PC-3 (cell line): ENCODE measurements at regions of chr2 and their contacts with region 1.

Region 1: GRCh38 chr2:25201265-25201664 is 32.9 kb upstream of the POMC start:
- DNase-seq: peak; percentile 25
- ATAC-seq: peak; percentile 63
- H3K4me3 ChIP-seq: no peak overlapping the region
- H3K27ac ChIP-seq: no peak overlapping the region
- H3K4me1 ChIP-seq: no peaks in the 10 kb centered on the region
- H3K27me3 ChIP-seq: no peaks in the 10 kb centered on the region
- CTCF ChIP-seq: peak; percentile 35; the same call in 1 of the 2 replicates

Region 2: GRCh38 chr2:24409700-24410556 is 791.3 kb before region 1 on chr2:
- CTCF ChIA-PET with region 1: no interaction called
- POLR2A ChIA-PET with region 1: no interaction called
- intact Hi-C with region 1: loop called (anchors 5 kb)
- DNase-seq: peak; percentile 82
- ATAC-seq: peak; percentile 96
- H3K4me3 ChIP-seq: no peak overlapping the region
- H3K27ac ChIP-seq: no peak overlapping the region
- H3K4me1 ChIP-seq: no peaks in the 10 kb centered on the region
- H3K27me3 ChIP-seq: no peaks in the 10 kb centered on the region
- CTCF ChIP-seq: peak; percentile 94

Region 3: DNA sequence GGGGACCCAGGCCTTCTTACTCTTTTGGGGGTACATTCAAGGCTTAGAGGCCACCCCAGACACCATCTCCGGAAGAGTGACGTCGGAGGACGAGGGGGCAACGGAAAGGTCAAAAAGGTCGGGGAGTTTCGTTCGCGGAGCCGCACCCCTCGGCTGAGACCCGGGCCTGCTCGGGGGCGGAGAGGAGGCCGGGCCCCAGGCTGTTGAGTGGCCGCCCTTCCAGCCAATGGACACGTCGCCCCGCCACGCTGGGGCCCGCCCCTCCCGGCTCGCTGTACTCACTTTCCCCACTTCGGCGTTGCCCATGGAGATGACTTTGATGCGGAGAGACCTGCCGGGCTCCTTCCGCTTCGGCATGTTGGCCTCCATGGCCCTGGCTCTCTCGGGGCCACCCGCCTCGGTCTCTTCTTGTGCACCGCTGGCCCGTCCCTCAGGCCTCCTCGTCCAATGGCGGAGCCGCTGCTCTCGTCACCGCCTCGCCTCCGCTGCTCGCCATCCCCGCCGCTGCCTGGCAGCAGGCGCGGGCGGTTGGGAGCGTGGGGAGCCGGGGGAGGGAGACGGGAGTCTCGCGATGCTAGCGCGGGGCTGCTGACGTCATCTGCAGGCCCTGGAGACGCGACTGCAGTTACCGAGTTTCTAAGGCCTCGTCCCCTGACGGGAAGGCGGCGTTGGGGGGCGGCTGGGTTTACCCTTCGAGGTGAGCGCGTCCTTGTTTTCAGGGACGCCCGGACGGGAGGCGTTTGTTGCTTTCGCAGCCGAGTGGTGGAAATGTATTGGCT is 229.5 kb before region 1 on chr2 and contains the start of gene DNAJC27:
- CTCF ChIA-PET with region 1: interaction called, 3 read pairs
- POLR2A ChIA-PET with region 1: no interaction called
- intact Hi-C with region 1: loop called (anchors 1 kb)
- DNase-seq: peak; percentile 98
- ATAC-seq: peak; percentile 92
- H3K4me3 ChIP-seq: peak within 1 kb of the TSS; percentile 97
- H3K27ac ChIP-seq: peak within 1 kb of the TSS; percentile 82
- H3K4me1 ChIP-seq: peaks cover 14% of the 10 kb centered on the region
- H3K27me3 ChIP-seq: no peaks in the 10 kb centered on the region
- CTCF ChIP-seq: no peak
- total RNA-seq, gene DNAJC27: 2.0 and 3.1 TPM in 2 replicates

Region 4: GRCh38 chr2:25165992-25166875 is 35.0 kb before region 1 on chr2:
- CTCF ChIA-PET with region 1: no interaction called
- POLR2A ChIA-PET with region 1: no interaction called
- intact Hi-C with region 1: loop called (anchors 1 kb)
- DNase-seq: peak; percentile 53
- ATAC-seq: peak; percentile 85
- H3K4me3 ChIP-seq: no peak overlapping the region
- H3K27ac ChIP-seq: no peak overlapping the region
- H3K4me1 ChIP-seq: no peaks in the 10 kb centered on the region
- H3K27me3 ChIP-seq: peaks cover 38% of the 10 kb centered on the region
- CTCF ChIP-seq: peak; percentile 60

Region 5: GRCh38 chr2:25236736-25237135 is 35.5 kb after region 1 on chr2:
- CTCF ChIA-PET with region 1: no interaction called
- POLR2A ChIA-PET with region 1: no interaction called
- intact Hi-C with region 1: no loop called
- DNase-seq: no peak
- ATAC-seq: no peak
- H3K4me3 ChIP-seq: no peak overlapping the region
- H3K27ac ChIP-seq: no peak overlapping the region
- H3K4me1 ChIP-seq: no peaks in the 10 kb centered on the region
- H3K27me3 ChIP-seq: no peaks in the 10 kb centered on the region
- CTCF ChIP-seq: no peak